ENCODE measurements at regions of chr18 and their contacts with region 1.

Region 1: DNA sequence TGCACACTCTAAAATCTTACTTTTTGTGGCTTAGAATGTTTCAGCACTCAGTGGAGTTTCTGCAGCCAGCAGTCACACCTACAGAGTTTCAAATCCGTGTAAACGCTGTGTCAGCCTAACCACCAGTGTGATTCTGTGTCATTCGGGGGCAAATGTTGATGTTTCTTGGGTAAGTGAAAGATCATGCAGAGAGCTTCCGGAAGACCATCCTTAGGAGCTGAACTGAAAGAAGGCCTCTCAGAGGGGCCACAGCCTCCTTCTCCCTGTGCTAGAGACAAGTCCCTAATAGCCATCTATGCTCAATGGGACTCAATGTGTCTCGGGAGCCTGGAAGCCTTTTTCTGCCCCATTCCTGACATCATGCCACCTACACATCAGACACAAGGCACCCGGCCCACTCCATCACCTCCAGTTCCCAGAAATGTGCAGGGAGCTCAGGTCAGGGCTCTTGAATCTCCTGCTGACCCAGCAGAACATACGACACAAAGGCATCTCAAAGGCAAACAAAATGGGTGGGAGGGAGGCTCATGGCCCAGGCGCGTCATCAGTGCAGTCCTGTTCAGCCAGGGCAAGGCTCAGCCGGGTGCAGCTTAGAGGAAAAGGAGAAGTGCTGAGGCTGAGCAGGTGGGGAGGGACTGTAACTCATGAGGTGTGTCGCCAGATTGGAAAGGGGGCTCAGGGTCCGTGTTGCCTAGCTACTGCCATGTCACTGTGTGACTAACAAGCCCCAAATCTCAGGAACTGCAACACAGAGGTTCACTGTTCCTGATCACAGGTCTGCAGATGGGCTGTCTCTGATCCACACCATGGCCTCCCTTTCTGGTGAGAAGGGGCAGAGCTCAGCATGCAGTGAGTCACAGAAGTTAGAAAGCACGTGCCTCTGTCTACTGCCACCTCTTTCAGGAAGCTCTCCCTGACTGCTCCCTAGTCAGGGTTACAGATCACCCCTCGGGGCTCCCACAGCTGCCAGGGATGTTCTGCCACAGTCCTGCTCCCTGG is 82.0 kb downstream of the SMAD7 start:
- DNase-seq: peak in 1 of 9 donors; percentile 65
- ATAC-seq: peak; percentile 79
- H3K4me3 ChIP-seq: no peak overlapping the region
- H3K4me3 Mint-ChIP-seq: peak overlapping the region in 1 of 10 donors; percentile 62
- H3K27ac ChIP-seq: no peak overlapping the region
- H3K27ac Mint-ChIP-seq: peak overlapping the region in 3 of 9 donors; percentile 55 to 88 (median 62)
- H3K4me1 ChIP-seq: peaks cover 0 to 41% of the 10 kb centered on the region in 2 donors
- H3K4me1 Mint-ChIP-seq: peaks cover 7 to 28% (median 11%) of the 10 kb centered on the region in 7 donors
- H3K27me3 ChIP-seq: no peaks in the 10 kb centered on the region
- H3K27me3 Mint-ChIP-seq: no peaks in the 10 kb centered on the region

Region 2: GRCh38 chr18:48813833-48814489 is 54.8 kb before region 1 on chr18:
- CTCF ChIA-PET with region 1: no interaction called
- POLR2A ChIA-PET with region 1: no interaction called
- intact Hi-C with region 1: loop called in 1 of 2 experiments (anchors 10 kb)
- DNase-seq: peak in 5 of 9 donors; percentile 6 to 43 (median 24)
- ATAC-seq: peak; percentile 77
- H3K4me3 ChIP-seq: no peak overlapping the region
- H3K4me3 Mint-ChIP-seq: peak overlapping the region in 7 of 10 donors; percentile 7 to 41 (median 15)
- H3K27ac ChIP-seq: peak overlapping the region; percentile 14
- H3K27ac Mint-ChIP-seq: peak overlapping the region in 8 of 9 donors; percentile 47 to 88 (median 72)
- H3K4me1 ChIP-seq: peaks cover 0 to 29% of the 10 kb centered on the region in 2 donors
- H3K4me1 Mint-ChIP-seq: peaks cover 12 to 48% (median 22%) of the 10 kb centered on the region in 7 donors
- H3K27me3 ChIP-seq: no peaks in the 10 kb centered on the region
- H3K27me3 Mint-ChIP-seq: peaks cover 0 to 2% (median 0%) of the 10 kb centered on the region in 5 donors

Region 3: GRCh38 chr18:48842259-48843061 is 26.3 kb before region 1 on chr18:
- CTCF ChIA-PET with region 1: no interaction called
- POLR2A ChIA-PET with region 1: no interaction called
- intact Hi-C with region 1: loop called in 1 of 2 experiments (anchors 1 kb)
- DNase-seq: peak; percentile 25 to 85 (median 71)
- ATAC-seq: peak; percentile 86
- H3K4me3 ChIP-seq: peak overlapping the region; percentile 37
- H3K4me3 Mint-ChIP-seq: peak overlapping the region; percentile 51 to 80 (median 75)
- H3K27ac ChIP-seq: peak overlapping the region; percentile 48
- H3K27ac Mint-ChIP-seq: peak overlapping the region; percentile 92 to 97 (median 93)
- H3K4me1 ChIP-seq: peaks cover 58 to 72% of the 10 kb centered on the region in 2 donors
- H3K4me1 Mint-ChIP-seq: peaks cover 55 to 90% (median 72%) of the 10 kb centered on the region in 7 donors
- H3K27me3 ChIP-seq: no peaks in the 10 kb centered on the region
- H3K27me3 Mint-ChIP-seq: no peaks in the 10 kb centered on the region

Region 4: DNA sequence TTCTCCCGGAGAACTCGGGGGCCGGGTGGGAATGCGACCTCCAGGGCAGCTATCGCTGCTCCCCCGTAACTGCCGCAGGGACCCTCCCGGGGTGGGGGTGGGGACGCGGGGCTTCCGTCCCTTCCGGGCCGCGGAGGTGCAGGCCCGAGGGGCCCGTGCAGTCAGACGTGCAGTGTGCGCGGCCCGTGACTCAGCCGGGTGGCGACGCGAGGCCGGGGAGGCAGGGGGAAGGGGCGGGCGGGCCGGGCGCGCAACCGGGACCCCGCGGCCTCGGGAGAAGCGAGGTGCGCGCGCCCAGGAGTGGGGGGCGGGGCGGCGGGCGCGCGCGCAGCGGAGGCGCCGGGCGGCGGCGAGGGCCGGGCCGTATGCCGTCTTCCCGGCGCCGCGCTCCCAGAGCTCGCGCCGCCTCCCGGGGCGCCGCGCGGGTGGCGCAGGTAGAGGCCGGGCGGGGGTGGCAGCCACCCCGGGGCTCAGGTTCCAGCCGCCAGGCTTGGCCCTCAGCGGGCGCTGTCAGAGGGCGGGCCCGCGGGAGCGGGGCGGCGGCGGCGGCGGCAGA is 107.0 kb after region 1 on chr18:
- CTCF ChIA-PET with region 1: no interaction called
- POLR2A ChIA-PET with region 1: no interaction called
- intact Hi-C with region 1: no loop called
- DNase-seq: peak in 8 of 9 donors; percentile 29 to 66 (median 38)
- ATAC-seq: peak; percentile 79
- H3K4me3 ChIP-seq: peak overlapping the region; percentile 50
- H3K4me3 Mint-ChIP-seq: peak overlapping the region in 7 of 10 donors; percentile 35 to 83 (median 59)
- H3K27ac ChIP-seq: no peak overlapping the region
- H3K27ac Mint-ChIP-seq: no peak overlapping the region
- H3K4me1 ChIP-seq: no peaks in the 10 kb centered on the region
- H3K4me1 Mint-ChIP-seq: peaks cover 0 to 16% (median 11%) of the 10 kb centered on the region in 7 donors
- H3K27me3 ChIP-seq: no peaks in the 10 kb centered on the region
- H3K27me3 Mint-ChIP-seq: peaks cover 8 to 65% (median 18%) of the 10 kb centered on the region in 5 donors

Measured in naive thymus-derived CD4-positive, alpha-beta T cell (primary cell).